Common myeloid progenitor, CD34-positive (primary cell): ENCODE measurements at regions of chr10 and their contacts with region 1.

Region 1: GRCh38 chr10:71569775-71570588 is 149.6 kb downstream of the C10orf105 start:
- DNase-seq: peak; percentile 46 to 73 (median 59)
- H3K4me3 ChIP-seq: no peak overlapping the region
- H3K27ac ChIP-seq: no peak overlapping the region
- H3K4me1 ChIP-seq: no peaks in the 10 kb centered on the region
- H3K27me3 ChIP-seq: peaks cover 0 to 5% (median 0%) of the 10 kb centered on the region in 5 experiments

Region 2: DNA sequence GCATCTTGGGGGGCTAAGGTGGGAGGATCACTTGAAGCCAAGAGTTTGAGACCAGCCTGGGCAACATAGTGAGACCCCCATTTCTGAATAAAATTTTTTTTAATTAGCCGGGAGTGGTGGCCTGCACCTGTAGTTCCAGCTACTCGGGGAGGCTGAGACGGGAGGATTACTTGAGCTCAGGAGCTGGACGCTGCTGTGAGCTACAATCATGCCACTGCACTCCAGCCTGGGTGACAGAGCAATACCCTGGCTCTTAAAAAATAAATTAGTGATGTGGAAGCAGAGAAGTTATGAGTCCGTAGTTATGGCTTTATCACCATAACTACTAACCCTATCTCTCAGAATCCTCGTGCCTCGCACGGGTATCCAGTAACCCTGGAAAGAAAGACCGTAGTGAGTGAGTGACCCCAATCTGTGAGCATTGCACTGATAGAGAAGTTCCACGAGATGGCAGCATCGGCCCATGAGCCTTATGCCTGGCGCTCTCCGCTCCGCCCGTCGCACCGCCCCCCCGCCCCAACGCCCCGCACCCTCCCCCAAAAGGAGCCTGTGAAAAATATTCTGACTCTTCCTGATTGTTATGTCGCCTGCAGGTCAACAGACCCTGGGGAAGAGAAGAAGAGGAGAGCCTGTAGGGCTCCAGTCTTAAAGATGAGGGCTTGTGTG is 255.8 kb before region 1 on chr10:
- CTCF ChIA-PET with region 1: interaction called, 39 read pairs
- POLR2A ChIA-PET with region 1: interaction called, 4 read pairs
- DNase-seq: peak; percentile 34 to 71 (median 63)
- H3K4me3 ChIP-seq: peak overlapping the region in 2 of 7 experiments; percentile 39 to 51
- H3K27ac ChIP-seq: no peak overlapping the region
- H3K4me1 ChIP-seq: peaks cover 3 to 31% (median 25%) of the 10 kb centered on the region in 4 experiments
- H3K27me3 ChIP-seq: peaks cover 0 to 1% (median 0%) of the 10 kb centered on the region in 5 experiments

Region 3: DNA sequence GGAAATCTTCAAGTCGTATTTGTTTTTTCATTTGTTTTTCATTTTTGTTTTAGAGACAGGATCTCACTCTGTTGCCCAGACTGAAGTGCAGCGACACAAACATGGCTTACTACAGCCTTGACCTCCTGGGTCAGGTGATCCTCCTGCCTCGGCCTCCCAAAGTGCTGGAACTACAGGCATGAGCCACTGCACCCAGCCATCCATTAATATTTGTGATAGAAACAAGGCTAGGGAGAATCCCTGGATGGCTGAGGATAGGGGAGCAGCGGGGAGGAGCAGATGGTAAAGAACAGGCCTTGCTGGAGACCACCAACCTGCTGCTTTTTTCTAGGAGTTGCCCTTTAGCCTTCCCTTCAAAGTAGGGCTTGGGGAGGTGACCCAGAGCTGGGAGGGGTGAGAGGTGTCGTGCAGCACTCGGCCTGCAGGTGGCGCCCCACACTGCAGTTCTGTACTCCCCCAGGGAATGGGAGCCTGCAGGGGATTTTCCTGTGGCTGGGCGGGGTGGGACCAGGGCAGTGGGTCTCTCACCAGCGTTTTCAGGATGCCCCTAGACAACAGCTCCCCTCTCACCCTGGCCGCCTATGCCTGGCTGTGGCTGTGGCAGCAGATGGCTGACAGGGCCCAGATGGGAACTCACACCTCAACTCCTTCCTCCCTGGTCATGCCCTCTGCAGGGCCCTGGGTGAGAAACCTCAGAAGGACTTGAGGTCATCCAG is 185.9 kb before region 1 on chr10:
- CTCF ChIA-PET with region 1: interaction called, 66 read pairs
- POLR2A ChIA-PET with region 1: interaction called, 3 read pairs
- DNase-seq: peak; percentile 58 to 81 (median 76)
- H3K4me3 ChIP-seq: no peak overlapping the region
- H3K27ac ChIP-seq: no peak overlapping the region
- H3K4me1 ChIP-seq: peaks cover 1 to 20% (median 11%) of the 10 kb centered on the region in 4 experiments
- H3K27me3 ChIP-seq: peaks cover 0 to 1% (median 0%) of the 10 kb centered on the region in 5 experiments

Region 4: GRCh38 chr10:71396084-71396720 is 173.8 kb before region 1 on chr10:
- CTCF ChIA-PET with region 1: interaction called, 37 read pairs
- POLR2A ChIA-PET with region 1: no interaction called
- DNase-seq: peak; percentile 63 to 73 (median 65)
- H3K4me3 ChIP-seq: peak overlapping the region; percentile 28 to 76 (median 56)
- H3K27ac ChIP-seq: no peak overlapping the region
- H3K4me1 ChIP-seq: peaks cover 0 to 18% (median 18%) of the 10 kb centered on the region in 4 experiments
- H3K27me3 ChIP-seq: peaks cover 0 to 36% (median 33%) of the 10 kb centered on the region in 5 experiments

Region 5: GRCh38 chr10:71587941-71588573 is 18.1 kb after region 1 on chr10:
- CTCF ChIA-PET with region 1: interaction called, 10 read pairs
- POLR2A ChIA-PET with region 1: no interaction called
- DNase-seq: no peak
- H3K4me3 ChIP-seq: no peak overlapping the region
- H3K27ac ChIP-seq: no peak overlapping the region
- H3K4me1 ChIP-seq: peaks cover 0 to 5% (median 0%) of the 10 kb centered on the region in 4 experiments
- H3K27me3 ChIP-seq: no peaks in the 10 kb centered on the region

Region 6: GRCh38 chr10:72470666-72471065 is 900.7 kb after region 1 on chr10:
- CTCF ChIA-PET with region 1: no interaction called
- POLR2A ChIA-PET with region 1: no interaction called
- DNase-seq: no peak
- H3K4me3 ChIP-seq: no peak overlapping the region
- H3K27ac ChIP-seq: no peak overlapping the region
- H3K4me1 ChIP-seq: no peaks in the 10 kb centered on the region
- H3K27me3 ChIP-seq: no peaks in the 10 kb centered on the region